GM23248 (cell line): ENCODE measurements at regions of chrX and their contacts with region 1.

Region 1: DNA sequence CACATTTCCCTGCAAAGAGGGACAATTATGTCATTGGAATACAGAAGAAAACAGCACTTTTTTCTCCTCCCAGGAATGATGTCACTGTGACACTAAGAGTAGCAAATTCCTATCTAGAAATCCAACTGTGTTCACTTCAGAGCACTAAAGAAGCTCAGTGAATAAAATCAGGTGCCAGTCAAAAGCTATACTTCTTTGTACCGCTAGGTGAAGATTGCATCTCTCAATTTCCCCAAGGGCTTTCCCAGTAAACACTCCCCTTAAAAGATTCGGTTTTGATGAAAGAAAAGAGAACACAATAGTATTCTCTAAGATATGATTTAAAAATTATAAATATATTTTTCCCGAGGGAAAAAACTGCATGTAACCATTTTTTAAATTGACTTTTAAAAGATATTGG is 104.7 kb upstream of the MID1 start:
- DNase-seq: no peak
- H3K4me3 ChIP-seq: no peak overlapping the region
- H3K27ac ChIP-seq: no peak overlapping the region
- H3K4me1 ChIP-seq: peaks cover 10% of the 10 kb centered on the region
- H3K27me3 ChIP-seq: no peaks in the 10 kb centered on the region

Region 2: DNA sequence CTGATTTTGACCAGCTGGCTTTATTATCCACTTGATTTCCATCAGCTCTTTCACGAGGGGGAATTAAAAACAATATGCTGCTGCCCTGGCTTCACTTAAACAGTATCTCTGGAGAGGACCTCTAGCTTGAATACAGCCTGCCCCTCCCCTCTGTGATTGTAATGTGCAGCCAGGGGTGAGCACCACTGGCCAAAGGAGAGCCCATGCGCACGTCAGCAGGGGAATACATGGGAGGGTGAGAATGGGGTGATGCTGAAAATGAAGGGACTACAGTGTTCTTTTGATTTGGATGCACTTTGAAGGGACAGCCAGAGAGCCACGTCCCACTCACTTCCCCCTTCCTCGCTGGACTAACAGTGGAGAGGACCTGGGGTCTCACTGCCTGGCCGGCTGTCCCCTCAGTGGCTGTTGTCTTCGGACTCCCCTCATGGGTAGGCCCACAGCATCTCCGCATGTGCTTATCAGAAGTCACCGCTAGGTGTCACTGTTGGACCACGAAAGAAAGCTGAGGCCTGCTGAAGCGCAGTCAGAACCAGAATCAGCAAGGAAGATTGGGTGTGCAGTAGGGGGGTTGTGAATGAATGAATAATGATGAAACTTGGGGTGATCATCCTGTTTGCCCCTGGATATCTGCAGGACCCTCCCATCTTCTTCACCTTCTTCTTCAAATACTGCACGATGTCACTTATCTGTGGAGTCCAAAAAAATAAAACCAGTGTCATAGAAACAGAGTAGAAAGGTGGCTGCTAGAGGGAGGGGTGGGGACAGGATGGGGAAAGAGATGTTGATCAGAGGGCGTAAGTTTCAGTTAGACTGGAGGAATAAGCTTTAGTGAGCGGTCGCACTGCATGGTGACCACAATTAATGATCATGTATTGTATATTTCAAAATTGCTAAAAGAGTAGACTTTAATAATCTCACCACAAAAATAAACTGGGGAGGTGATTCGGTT is 535.5 kb before region 1 on chrX:
- in situ Hi-C with region 1: loop called (anchors 25 kb)
- DNase-seq: peak; percentile 58
- H3K4me3 ChIP-seq: no peak overlapping the region
- H3K27ac ChIP-seq: no peak overlapping the region
- H3K4me1 ChIP-seq: no peaks in the 10 kb centered on the region; the same call in 1 of the 2 replicates
- H3K27me3 ChIP-seq: no peaks in the 10 kb centered on the region

Region 3: DNA sequence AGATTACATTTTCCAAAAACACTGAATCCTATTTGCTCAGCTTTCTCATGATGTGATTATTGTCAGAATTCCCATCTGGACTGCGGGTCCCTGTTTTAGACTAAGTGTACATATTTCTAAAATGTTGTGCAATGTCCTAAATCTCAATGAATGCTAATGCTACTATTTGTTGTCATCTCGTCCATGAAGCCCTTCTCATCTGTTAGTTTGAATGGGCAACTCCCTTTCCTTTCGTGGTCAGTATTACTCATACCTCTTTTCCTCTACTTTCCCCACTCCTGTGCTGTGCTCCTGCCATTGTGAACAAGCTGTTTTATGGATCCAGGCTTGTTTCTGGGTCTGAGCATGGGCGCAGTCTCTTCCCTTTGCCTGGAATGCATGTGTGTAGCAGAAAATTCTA is 195.7 kb before region 1 on chrX:
- in situ Hi-C with region 1: no loop called
- DNase-seq: peak; percentile 65
- H3K4me3 ChIP-seq: no peak overlapping the region
- H3K27ac ChIP-seq: 0 out of 2 replicates have a peak overlapping the region, but pooled peaks have one; percentile 24
- H3K4me1 ChIP-seq: peaks cover 29% of the 10 kb centered on the region
- H3K27me3 ChIP-seq: no peaks in the 10 kb centered on the region

Region 4: DNA sequence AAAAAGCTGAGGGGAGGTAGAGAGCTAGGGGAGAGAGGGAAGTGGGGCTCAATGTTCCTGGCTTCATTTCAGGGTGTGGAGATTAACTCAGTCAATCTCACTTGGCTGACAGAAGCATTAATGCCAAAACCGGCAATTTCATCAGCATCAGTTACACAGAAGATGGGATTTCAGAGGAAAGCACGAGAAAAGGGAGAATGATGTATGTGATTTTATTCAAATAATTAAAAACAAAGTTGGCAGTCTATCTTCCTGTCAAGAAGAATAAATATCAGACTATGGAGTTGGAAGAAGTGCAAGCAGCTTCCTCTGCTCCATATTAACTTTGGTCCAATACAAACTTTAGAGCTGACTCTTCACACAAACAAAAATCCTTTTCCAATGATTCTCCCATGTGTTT is 356.4 kb after region 1 on chrX:
- in situ Hi-C with region 1: loop called (anchors 25 kb)
- DNase-seq: no peak
- H3K4me3 ChIP-seq: no peak overlapping the region
- H3K27ac ChIP-seq: no peak overlapping the region
- H3K4me1 ChIP-seq: no peaks in the 10 kb centered on the region
- H3K27me3 ChIP-seq: no peaks in the 10 kb centered on the region